ENCODE measurements at regions of chr14 and their contacts with region 1.

Region 1: DNA sequence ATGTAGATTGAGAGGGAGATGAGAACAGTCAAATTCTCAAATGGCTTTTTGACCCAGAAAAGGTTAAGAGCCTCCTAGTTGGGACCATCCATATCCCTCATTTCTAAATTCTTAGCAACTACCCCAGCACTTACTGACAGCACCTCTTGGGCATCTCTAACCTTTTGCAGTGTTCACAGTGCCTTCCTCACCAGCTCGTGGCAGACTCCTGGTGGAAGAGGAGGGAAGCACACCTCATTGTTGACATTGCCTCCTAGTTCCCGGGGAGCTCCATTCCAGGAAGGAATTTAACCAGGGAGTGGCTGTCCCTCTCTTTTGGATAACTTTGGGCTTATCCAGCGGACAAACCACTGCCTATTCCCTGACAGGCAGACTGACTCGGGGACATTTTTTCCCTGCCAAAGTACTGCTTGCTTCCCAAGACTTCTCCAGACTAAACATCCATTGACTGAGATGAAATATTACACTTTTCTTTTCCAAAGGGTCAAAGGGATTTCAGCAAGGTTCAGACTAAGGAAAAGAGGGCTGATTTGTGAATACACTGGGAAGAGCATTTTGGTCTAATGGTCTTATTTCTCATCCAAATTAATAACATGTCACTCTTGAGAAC is 9.0 kb upstream of the OR6J1 start:
- ATAC-seq: peak in 7 of 8 experiments; percentile 44 to 89 (median 80)
- H3K4me3 ChIP-seq: no peak overlapping the region
- H3K27ac ChIP-seq: no peak overlapping the region
- H3K4me1 ChIP-seq: no peaks in the 10 kb centered on the region

Region 2: GRCh38 chr14:22561661-22562579 is 91.2 kb before region 1 on chr14:
- in situ Hi-C with region 1: loop called in 2 of 9 experiments (anchors 10 to 25 kb)
- ATAC-seq: no peak
- H3K4me3 ChIP-seq: no peak overlapping the region
- H3K27ac ChIP-seq: no peak overlapping the region
- H3K4me1 ChIP-seq: no peaks in the 10 kb centered on the region